ENCODE measurements at regions of chr22 and their contacts with region 1.

Region 1: GRCh38 chr22:45101515-45102227 is 62.1 kb upstream of the NUP50 start:
- DNase-seq: no peak
- H3K4me3 ChIP-seq: no peak overlapping the region
- CTCF ChIP-seq: peak; percentile 84

Region 2: GRCh38 chr22:44901301-44901700 is 200.4 kb before region 1 on chr22:
- CTCF ChIA-PET with region 1: no interaction called
- POLR2A ChIA-PET with region 1: no interaction called
- DNase-seq: no peak
- H3K4me3 ChIP-seq: no peak overlapping the region
- CTCF ChIP-seq: no peak

Region 3: GRCh38 chr22:45091254-45091854 is 10.3 kb before region 1 on chr22:
- CTCF ChIA-PET with region 1: interaction called, 18 read pairs
- POLR2A ChIA-PET with region 1: no interaction called
- DNase-seq: no peak
- H3K4me3 ChIP-seq: no peak overlapping the region
- CTCF ChIP-seq: no peak

Region 4: GRCh38 chr22:45114151-45114550 is 12.5 kb after region 1 on chr22:
- CTCF ChIA-PET with region 1: interaction called, 13 read pairs
- POLR2A ChIA-PET with region 1: no interaction called
- DNase-seq: no peak
- H3K4me3 ChIP-seq: no peak overlapping the region
- CTCF ChIP-seq: no peak

Region 5: GRCh38 chr22:45149671-45150070 is 48.0 kb after region 1 on chr22:
- CTCF ChIA-PET with region 1: interaction called, 11 read pairs
- POLR2A ChIA-PET with region 1: no interaction called
- DNase-seq: peak; percentile 37
- H3K4me3 ChIP-seq: no peak overlapping the region
- CTCF ChIP-seq: no peak

Region 6: GRCh38 chr22:45263463-45264269 is 162.0 kb after region 1 on chr22:
- CTCF ChIA-PET with region 1: interaction called, 27 read pairs
- POLR2A ChIA-PET with region 1: no interaction called
- DNase-seq: no peak
- H3K4me3 ChIP-seq: no peak overlapping the region
- CTCF ChIP-seq: peak; percentile 78

Region 7: DNA sequence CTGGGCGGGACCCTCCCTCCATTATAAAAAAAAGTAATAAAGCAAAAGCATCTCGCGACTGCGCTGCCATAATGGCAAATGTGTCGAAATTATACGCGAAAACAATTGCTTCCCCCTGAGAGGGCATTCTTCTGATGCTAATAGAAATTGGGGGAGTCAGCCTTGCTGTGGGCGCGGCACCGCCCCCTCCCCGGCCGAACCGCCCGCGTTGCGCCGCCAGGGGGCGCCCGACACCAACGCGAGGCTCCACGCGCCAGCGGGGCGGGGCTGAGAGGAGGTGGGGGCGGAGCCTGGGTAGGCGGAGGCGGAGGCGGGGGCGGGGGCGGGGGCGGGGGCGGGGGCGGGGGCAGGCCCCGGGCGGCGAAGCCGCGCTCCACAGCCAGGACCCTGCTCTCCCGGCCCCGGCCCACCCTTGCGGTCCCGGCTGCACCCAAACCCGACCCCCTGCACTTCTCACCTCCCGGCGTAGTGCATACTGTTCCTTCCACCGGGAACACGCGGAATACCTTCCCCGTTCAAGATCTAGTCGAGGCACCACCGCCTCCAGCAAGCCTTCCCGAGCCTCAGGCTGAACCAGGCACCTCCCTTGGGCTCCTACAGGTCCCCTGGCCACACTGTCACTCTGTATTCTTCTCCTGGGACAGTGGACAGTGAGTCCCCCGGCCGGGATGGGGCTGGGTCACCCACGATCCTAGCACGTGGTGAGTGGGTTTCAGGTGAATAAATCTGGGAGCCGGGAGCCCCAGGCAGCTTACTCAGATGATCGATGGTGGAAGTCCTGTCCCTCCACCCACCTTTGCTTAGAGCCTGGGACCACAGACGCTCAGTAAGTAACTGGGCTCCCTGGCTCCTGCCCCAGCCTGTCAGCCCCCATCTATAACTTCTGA is 167.5 kb after region 1 on chr22:
- CTCF ChIA-PET with region 1: interaction called, 27 read pairs
- POLR2A ChIA-PET with region 1: no interaction called
- DNase-seq: no peak
- H3K4me3 ChIP-seq: peak overlapping the region; percentile 67
- CTCF ChIP-seq: peak; percentile 82

Region 8: DNA sequence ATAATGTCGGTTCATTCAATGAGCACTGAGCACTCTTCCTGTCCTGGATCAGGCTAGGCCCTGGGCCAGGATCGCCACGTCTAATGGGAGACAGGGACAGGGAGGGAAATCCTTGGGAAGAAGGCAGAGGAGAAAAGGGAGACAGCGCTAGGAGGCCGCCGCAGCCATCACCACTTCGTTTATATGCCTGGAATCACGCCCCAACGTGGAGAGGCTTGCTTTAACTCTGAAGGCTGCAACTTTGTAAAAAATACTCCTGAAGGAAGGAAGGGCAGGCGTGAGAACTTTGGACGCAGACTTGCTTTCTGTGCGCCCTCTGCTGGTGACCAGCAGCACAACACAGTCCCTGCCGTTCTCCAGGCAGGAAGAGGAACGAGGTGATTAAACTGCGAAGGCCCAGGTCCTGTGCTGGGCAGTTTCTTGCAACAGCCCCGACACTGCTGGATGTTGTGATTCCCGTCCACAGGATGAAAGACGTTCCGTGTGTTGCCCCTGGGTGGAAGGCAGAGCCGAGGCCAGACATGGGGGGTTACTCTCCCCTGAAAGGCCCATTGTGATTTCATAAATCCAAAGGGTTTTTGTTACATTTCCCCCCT is 334.0 kb after region 1 on chr22:
- CTCF ChIA-PET with region 1: interaction called, 14 read pairs
- POLR2A ChIA-PET with region 1: no interaction called
- DNase-seq: peak; percentile 56
- H3K4me3 ChIP-seq: no peak overlapping the region
- CTCF ChIP-seq: peak; percentile 97

Measured in AG04449 (cell line).